Naive thymus-derived CD4-positive, alpha-beta T cell (primary cell): ENCODE measurements at regions of chr1 and their contacts with region 1.

Region 1: DNA sequence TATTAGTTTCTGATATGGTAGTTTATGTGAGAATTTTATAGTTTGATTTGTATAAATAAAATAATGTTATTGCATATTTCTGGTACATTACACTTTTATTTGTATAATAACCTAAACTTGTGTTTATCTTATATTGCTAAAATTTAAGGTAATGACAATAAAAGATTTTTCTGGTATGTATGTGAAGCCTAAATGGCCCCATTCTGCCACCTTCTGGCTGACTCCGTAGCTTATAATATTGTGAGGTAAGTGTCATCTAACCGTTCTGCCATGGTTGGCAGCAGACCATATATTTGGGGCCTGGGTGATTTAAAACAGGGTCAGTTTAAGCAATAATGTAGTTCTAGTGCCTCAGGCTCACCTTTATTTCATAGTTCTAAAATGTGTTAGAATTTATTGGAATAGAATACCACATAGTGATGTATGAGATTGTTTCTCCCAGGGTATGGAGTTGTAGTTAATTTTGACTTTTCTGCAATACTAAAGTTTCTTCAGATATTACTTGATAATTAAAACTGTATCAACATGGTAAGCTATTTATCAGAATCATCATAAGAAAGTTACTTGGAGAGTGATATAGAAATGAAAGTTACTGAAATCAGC is 21.2 kb upstream of the PRKACB start:
- DNase-seq: peak in 7 of 9 donors; percentile 20 to 58 (median 44)
- ATAC-seq: peak; percentile 78
- H3K4me3 ChIP-seq: no peak overlapping the region
- H3K4me3 Mint-ChIP-seq: no peak overlapping the region
- H3K27ac ChIP-seq: no peak overlapping the region
- H3K27ac Mint-ChIP-seq: no peak overlapping the region
- H3K4me1 ChIP-seq: no peaks in the 10 kb centered on the region
- H3K4me1 Mint-ChIP-seq: no peaks in the 10 kb centered on the region
- H3K27me3 ChIP-seq: no peaks in the 10 kb centered on the region
- H3K27me3 Mint-ChIP-seq: peaks cover 0 to 10% (median 0%) of the 10 kb centered on the region in 5 donors

Region 2: DNA sequence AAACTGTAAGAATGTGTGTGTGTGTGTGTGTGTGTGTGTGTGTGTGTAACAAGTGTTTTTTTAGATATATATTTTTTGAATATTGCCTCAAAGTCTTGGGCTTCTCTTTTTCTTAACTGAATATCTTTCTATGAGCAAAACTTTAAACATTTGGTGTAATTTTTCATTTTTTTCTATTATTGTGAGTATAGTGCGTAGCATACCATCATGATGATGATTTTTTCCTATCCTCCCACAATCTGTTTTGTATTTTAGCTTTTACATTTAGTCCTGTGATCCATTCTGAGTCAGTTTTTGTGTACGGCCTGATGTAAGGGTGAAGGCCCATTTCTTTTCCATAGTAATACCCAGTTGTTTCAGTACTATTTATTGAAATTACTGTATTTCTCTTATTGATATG is 804.5 kb before region 1 on chr1:
- CTCF ChIA-PET with region 1: no interaction called
- POLR2A ChIA-PET with region 1: no interaction called
- intact Hi-C with region 1: loop called in 1 of 2 experiments (anchors 10 kb)
- DNase-seq: no peak
- ATAC-seq: no peak
- H3K4me3 ChIP-seq: no peak overlapping the region
- H3K4me3 Mint-ChIP-seq: no peak overlapping the region
- H3K27ac ChIP-seq: no peak overlapping the region
- H3K27ac Mint-ChIP-seq: no peak overlapping the region
- H3K4me1 ChIP-seq: no peaks in the 10 kb centered on the region
- H3K4me1 Mint-ChIP-seq: no peaks in the 10 kb centered on the region
- H3K27me3 ChIP-seq: no peaks in the 10 kb centered on the region
- H3K27me3 Mint-ChIP-seq: no peaks in the 10 kb centered on the region

Region 3: DNA sequence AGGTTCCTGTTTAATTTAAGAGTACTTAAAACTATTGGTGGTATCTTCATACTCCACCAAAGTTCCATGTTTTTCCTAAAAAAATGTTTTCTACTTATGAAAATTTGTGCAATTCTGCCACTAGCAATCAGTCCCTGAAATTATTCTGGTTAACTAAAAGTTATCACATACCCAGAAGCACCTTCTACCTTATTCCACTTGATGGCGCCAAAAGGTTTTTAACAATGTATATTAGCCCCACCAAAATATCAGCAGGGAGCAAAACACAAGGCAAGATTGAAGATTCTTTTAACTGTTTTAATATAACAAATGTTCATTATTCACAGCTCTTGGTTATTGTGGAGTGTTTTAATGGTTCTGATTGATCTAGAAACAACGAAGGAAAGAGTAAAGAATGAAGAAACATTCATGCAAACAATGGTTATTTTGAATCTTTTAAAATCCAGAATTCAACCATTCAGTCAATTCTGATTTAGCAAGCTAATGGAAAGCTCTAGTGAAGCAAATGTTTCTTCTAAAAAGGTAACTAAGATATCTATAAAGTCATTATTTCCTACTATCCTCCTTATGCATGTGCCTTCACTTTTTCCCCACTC is 191.1 kb before region 1 on chr1:
- CTCF ChIA-PET with region 1: interaction called, 15 read pairs
- POLR2A ChIA-PET with region 1: no interaction called
- intact Hi-C with region 1: loop called (anchors 1 kb)
- DNase-seq: peak in 7 of 9 donors; percentile 18 to 60 (median 45)
- ATAC-seq: peak; percentile 79
- H3K4me3 ChIP-seq: no peak overlapping the region
- H3K4me3 Mint-ChIP-seq: no peak overlapping the region
- H3K27ac ChIP-seq: no peak overlapping the region
- H3K27ac Mint-ChIP-seq: no peak overlapping the region
- H3K4me1 ChIP-seq: no peaks in the 10 kb centered on the region
- H3K4me1 Mint-ChIP-seq: no peaks in the 10 kb centered on the region
- H3K27me3 ChIP-seq: no peaks in the 10 kb centered on the region
- H3K27me3 Mint-ChIP-seq: peaks cover 4 to 19% (median 7%) of the 10 kb centered on the region in 5 donors

Region 4: DNA sequence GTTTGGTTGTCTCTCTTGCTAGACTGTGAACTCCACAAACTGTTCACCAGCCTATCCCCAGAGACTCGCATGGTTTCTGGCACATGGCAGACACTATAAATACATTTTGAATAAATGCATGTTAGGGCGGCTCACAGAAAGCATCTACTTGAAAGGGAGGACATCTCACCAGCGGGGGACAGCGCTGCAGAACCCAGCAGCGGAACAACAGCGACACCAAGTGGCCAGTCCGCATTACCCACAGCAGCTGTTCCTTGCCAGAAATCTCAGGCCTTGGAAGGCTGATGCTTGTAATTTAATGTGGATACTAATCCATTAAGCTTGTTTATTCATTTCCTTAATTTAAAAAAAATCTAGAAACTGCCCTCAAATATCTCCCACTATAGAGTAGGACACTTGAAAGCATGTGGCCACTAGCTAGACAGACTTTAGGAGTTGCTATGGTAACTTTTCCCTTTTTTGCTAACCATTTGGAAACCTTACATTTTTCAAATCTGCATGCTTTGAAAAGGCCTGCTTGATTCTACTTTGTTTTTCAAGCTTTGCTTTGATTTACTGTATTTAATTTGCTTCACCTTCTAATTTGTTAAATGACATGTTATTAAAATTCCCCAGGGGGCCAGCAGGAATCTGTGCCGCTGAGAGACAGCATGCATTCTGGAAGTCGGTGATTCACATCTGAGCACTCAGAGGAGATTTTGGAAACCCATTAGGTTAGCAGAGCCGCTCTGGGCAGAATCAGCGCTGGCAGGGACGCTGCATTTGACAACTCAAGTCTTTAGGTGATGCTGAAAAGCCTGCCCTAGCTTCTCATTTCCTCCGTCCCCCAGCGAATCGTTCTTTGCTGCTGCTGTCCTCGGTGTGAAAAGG is 630.9 kb after region 1 on chr1:
- CTCF ChIA-PET with region 1: no interaction called
- POLR2A ChIA-PET with region 1: no interaction called
- intact Hi-C with region 1: loop called in 1 of 2 experiments (anchors 1 kb)
- DNase-seq: peak; percentile 47 to 77 (median 67)
- ATAC-seq: peak; percentile 93
- H3K4me3 ChIP-seq: no peak overlapping the region
- H3K4me3 Mint-ChIP-seq: no peak overlapping the region
- H3K27ac ChIP-seq: no peak overlapping the region
- H3K27ac Mint-ChIP-seq: peak overlapping the region in 1 of 9 donors; percentile 29
- H3K4me1 ChIP-seq: no peaks in the 10 kb centered on the region
- H3K4me1 Mint-ChIP-seq: peaks cover 0 to 7% (median 3%) of the 10 kb centered on the region in 7 donors
- H3K27me3 ChIP-seq: no peaks in the 10 kb centered on the region
- H3K27me3 Mint-ChIP-seq: peaks cover 9 to 26% (median 18%) of the 10 kb centered on the region in 5 donors